Heart left ventricle (tissue), 16 donors: ENCODE measurements at regions of chr3 and their contacts with region 1.

Region 1: DNA sequence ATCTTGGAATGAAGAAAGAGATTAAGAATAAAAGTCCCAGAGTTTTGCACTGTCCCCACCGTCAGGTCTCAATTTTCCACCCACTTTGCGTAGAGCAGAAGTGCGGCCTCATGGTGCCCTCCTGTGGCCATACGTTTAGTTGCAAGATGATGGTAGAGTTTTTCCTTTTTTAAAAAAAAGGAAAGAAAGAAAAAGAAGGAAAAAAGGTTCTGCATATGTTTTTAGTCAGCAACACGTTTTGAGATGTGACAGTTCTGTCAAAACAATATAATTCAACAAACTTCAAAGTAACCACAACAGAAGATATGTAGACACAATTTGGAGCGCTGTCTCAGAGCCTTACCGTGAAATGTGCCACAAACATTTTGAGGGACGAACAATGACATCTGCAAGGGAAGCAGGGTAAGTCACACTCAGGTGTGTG is 24.6 kb downstream of the EBLN2 start:
- DNase-seq: peak in 2 of 5 donors; percentile 26 to 39
- ATAC-seq: peak; percentile 49 to 76 (median 60)
- H3K4me3 ChIP-seq: no peak overlapping the region
- H3K27ac ChIP-seq: no peak overlapping the region
- H3K4me1 ChIP-seq: peaks cover 0 to 7% (median 0%) of the 10 kb centered on the region in 12 donors
- H3K27me3 ChIP-seq: no peaks in the 10 kb centered on the region
- CTCF ChIP-seq: peak; percentile 68 to 91 (median 80)
- POLR2A ChIP-seq: no peak

Region 2: GRCh38 chr3:71725279-71725991 is 1360.6 kb before region 1 on chr3 and contains the start of gene EIF4E3:
- intact Hi-C with region 1: loop called in 5 of 10 experiments (anchors 5 to 10 kb)
- DNase-seq: peak; percentile 40 to 76 (median 46)
- ATAC-seq: peak; percentile 15 to 75 (median 64)
- H3K4me3 ChIP-seq: peak within 1 kb of the TSS; percentile 73 to 96 (median 86)
- H3K27ac ChIP-seq: peak within 1 kb of the TSS; percentile 25 to 89 (median 75)
- H3K4me1 ChIP-seq: peaks cover 0 to 58% (median 12%) of the 10 kb centered on the region in 12 donors
- H3K27me3 ChIP-seq: no peaks in the 10 kb centered on the region
- CTCF ChIP-seq: no peak
- POLR2A ChIP-seq: no peak
- total RNA-seq, gene EIF4E3: 28.5 to 53.0 (median 47.1) TPM

Region 3: DNA sequence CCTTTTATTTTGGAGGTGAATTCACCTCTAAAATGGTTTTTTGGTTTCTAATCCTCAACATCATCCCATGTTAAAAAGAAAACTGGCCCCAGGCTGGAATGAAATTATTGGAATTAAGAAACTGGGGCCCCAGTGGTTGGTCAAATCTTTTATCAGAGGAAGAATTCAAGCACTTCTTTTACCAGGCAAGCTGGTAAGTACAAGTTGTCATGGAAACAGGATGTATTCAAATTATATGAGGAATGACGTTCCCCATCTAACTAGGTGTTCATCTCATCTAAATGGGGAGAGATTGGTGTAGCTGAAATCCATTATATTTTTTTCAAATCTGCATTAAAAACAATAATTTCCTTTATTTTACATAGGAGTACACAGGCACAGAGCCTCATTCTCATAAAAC is 1351.2 kb before region 1 on chr3:
- intact Hi-C with region 1: loop called in 2 of 10 experiments (anchors 10 kb)
- DNase-seq: no peak
- ATAC-seq: no peak
- H3K4me3 ChIP-seq: no peak overlapping the region
- H3K27ac ChIP-seq: no peak overlapping the region
- H3K4me1 ChIP-seq: peaks cover 0 to 4% (median 0%) of the 10 kb centered on the region in 12 donors
- H3K27me3 ChIP-seq: peaks cover 0 to 5% (median 0%) of the 10 kb centered on the region in 9 donors
- CTCF ChIP-seq: no peak
- POLR2A ChIP-seq: no peak

Region 4: DNA sequence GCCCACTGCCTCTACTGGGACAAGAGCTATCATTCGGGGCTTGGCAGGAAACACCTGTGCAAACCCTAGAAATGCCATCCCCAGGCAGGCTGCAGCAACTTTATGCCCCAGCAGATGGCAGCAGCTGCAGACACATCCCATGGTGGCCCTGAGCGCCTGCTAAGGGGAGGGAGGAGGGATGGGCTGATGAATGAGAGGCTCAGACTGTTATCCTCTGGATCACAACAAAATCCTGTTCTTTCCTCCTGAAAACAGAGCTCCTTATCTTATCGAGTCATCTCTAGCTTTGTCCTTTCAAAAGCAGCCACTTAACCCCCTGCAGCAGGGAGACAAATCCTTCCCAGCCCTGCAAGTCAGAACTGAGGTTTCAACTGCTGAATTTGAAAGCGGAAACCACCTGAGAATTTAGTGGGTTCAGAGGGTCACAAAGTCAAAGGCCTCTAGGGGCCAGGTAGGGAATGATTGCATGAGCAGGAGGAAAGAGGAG is 1210.6 kb before region 1 on chr3:
- intact Hi-C with region 1: loop called in 6 of 10 experiments (anchors 5 to 10 kb)
- DNase-seq: peak; percentile 59 to 85 (median 76)
- ATAC-seq: peak; percentile 80 to 96 (median 91)
- H3K4me3 ChIP-seq: no peak overlapping the region
- H3K27ac ChIP-seq: no peak overlapping the region
- H3K4me1 ChIP-seq: peaks cover 0 to 8% (median 0%) of the 10 kb centered on the region in 12 donors
- H3K27me3 ChIP-seq: peaks cover 0 to 9% (median 0%) of the 10 kb centered on the region in 9 donors
- CTCF ChIP-seq: peak; percentile 77 to 90 (median 85)
- POLR2A ChIP-seq: no peak

Region 5: GRCh38 chr3:72847751-72848702 is 238.1 kb before region 1 on chr3 and contains the start of gene SHQ1:
- intact Hi-C with region 1: loop called in 7 of 10 experiments (anchors 5 to 10 kb)
- DNase-seq: peak; percentile 96 to 98 (median 97)
- ATAC-seq: peak; percentile 98 to 99 (median 98)
- H3K4me3 ChIP-seq: peak within 1 kb of the TSS; percentile 30 to 95 (median 76)
- H3K27ac ChIP-seq: peak within 1 kb of the TSS; percentile 29 to 84 (median 74)
- H3K4me1 ChIP-seq: peaks cover 7 to 47% (median 20%) of the 10 kb centered on the region in 12 donors
- H3K27me3 ChIP-seq: no peaks in the 10 kb centered on the region
- CTCF ChIP-seq: no peak
- POLR2A ChIP-seq: peak in 1 of 2 donors; percentile 71
- total RNA-seq, gene SHQ1: 13.6 to 26.0 (median 19.9) TPM

Region 6: DNA sequence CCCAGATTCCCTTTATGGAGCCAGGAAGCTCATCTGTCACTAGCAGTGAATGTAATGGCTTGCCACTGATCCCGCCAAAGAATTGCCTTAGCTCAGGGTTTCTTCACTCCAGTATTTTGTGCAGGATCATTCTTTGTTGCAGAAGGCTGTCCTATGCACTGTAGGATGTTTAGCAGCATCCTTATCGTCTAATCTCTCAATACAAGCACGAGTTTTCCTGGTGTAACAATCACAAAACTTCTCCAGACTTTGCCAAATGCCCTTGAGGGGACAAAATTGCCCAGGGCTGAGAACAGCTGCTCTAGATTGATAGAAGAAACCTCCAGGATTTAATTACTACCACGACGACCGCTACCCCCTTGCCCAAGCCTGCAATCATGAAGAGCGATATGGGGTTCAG is 231.1 kb before region 1 on chr3:
- intact Hi-C with region 1: loop called in 5 of 10 experiments (anchors 5 to 10 kb)
- DNase-seq: no peak
- ATAC-seq: no peak
- H3K4me3 ChIP-seq: no peak overlapping the region
- H3K27ac ChIP-seq: no peak overlapping the region
- H3K4me1 ChIP-seq: peaks cover 0 to 3% (median 0%) of the 10 kb centered on the region in 12 donors
- H3K27me3 ChIP-seq: no peaks in the 10 kb centered on the region
- CTCF ChIP-seq: no peak
- POLR2A ChIP-seq: no peak

Region 7: DNA sequence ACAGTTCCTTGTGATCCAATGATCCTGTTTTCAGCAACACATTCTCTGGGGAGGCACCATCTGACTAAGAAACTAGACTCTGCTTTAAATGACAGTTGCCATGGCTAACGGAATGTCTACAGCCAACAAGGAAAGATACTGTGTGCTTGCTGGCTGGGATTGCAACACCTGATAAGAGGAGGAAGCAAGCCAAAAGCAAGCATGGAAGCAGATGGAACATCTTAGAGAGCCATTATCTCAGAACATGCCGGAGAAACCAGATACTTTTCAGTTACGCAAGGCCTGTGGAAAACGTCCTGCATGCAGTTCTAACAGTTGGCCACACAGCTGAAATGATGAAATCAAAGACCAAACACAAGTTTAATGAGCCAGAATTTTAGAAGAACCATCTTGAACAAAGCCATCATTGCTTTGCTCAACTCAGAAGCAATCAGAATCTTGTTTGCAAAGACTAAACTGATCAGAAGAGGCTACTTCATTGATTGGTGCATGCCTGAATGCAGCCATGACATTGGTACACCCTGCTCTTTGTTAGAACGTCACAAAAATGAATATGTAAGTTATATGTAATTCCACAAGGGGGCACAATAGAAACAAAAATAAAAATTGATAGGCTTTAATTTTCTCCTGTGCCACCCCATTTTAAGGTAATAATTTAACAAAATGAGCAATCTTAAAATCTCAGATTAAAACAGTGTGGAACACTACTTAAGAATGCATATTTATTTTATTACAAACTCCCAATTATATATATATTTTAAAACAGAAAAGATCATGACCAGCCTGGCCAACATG is 147.4 kb before region 1 on chr3:
- intact Hi-C with region 1: loop called in 8 of 10 experiments (anchors 1 to 10 kb)
- DNase-seq: peak in 4 of 5 donors; percentile 54 to 79 (median 58)
- ATAC-seq: peak; percentile 85 to 96 (median 92)
- H3K4me3 ChIP-seq: peak overlapping the region in 1 of 12 donors; percentile 15
- H3K27ac ChIP-seq: peak overlapping the region in 11 of 12 donors; percentile 24 to 70 (median 49)
- H3K4me1 ChIP-seq: peaks cover 0 to 28% (median 7%) of the 10 kb centered on the region in 12 donors
- H3K27me3 ChIP-seq: no peaks in the 10 kb centered on the region
- CTCF ChIP-seq: peak in 11 of 12 donors; percentile 47 to 80 (median 62)
- POLR2A ChIP-seq: no peak

Region 8: DNA sequence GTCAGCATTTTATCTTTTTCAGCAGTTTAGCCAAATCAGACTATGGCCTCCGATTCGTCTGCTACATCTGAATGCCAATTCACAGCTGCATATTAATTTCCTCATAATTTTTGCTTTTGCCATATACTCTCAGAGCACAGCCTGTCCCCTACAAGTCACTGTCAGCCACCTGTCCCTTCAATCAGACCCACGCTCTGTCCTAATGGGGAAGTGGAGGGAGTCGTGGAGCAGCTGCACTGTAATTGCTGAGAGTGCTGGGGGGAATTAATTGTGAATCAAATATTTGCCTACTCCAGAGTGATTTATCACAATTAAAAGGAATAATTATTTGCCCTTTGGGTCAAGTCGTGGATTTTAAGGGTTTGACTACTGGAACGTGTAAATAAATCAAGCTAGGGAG is 50.9 kb after region 1 on chr3:
- intact Hi-C with region 1: no loop called
- DNase-seq: no peak
- ATAC-seq: no peak
- H3K4me3 ChIP-seq: no peak overlapping the region
- H3K27ac ChIP-seq: no peak overlapping the region
- H3K4me1 ChIP-seq: peaks cover 0 to 9% (median 0%) of the 10 kb centered on the region in 12 donors
- H3K27me3 ChIP-seq: no peaks in the 10 kb centered on the region
- CTCF ChIP-seq: no peak
- POLR2A ChIP-seq: no peak